Left ventricle myocardium inferior (tissue), 1 donor: ENCODE measurements at regions of chr1 and their contacts with region 1.

Region 1: GRCh38 chr1:26142159-26142558 is 16.7 kb upstream of the FAM110D start:
- DNase-seq: no peak
- H3K4me3 ChIP-seq: no peak overlapping the region
- H3K27ac ChIP-seq: no peak overlapping the region
- H3K4me1 ChIP-seq: peaks cover 11% of the 10 kb centered on the region
- H3K27me3 ChIP-seq: no peaks in the 10 kb centered on the region
- CTCF ChIP-seq: no peak

Region 2: GRCh38 chr1:26049531-26050247 is 92.5 kb before region 1 on chr1:
- intact Hi-C with region 1: no loop called
- DNase-seq: no peak
- H3K4me3 ChIP-seq: no peak overlapping the region
- H3K27ac ChIP-seq: peak overlapping the region; percentile 74
- H3K4me1 ChIP-seq: peaks cover 61% of the 10 kb centered on the region
- H3K27me3 ChIP-seq: peaks cover 78% of the 10 kb centered on the region
- CTCF ChIP-seq: no peak

Region 3: DNA sequence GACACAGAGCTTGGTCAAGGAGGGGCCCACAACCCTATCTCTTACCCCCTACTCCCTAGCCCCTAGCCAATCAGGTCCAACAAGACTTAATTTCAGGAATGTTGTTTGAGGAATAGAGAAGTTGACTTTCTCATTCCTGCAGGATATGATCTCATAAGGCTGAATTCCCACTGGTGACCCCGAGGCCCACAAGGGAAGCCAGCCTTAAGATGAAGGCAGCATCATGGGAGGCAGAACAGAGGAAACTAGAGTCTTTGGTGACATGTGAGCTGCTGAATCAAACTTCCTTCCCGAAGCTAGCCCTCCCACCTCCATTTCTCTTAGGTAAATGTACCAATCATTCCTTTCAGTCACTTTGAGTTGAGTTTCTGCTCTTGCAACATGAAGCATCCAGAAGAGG is 39.6 kb before region 1 on chr1:
- intact Hi-C with region 1: loop called (anchors 2 kb)
- DNase-seq: no peak
- H3K4me3 ChIP-seq: no peak overlapping the region
- H3K27ac ChIP-seq: no peak overlapping the region
- H3K4me1 ChIP-seq: peaks cover 17% of the 10 kb centered on the region
- H3K27me3 ChIP-seq: no peaks in the 10 kb centered on the region
- CTCF ChIP-seq: no peak